WTC11 (cell line): ENCODE measurements at regions of chr3 and their contacts with region 1.

Region 1: DNA sequence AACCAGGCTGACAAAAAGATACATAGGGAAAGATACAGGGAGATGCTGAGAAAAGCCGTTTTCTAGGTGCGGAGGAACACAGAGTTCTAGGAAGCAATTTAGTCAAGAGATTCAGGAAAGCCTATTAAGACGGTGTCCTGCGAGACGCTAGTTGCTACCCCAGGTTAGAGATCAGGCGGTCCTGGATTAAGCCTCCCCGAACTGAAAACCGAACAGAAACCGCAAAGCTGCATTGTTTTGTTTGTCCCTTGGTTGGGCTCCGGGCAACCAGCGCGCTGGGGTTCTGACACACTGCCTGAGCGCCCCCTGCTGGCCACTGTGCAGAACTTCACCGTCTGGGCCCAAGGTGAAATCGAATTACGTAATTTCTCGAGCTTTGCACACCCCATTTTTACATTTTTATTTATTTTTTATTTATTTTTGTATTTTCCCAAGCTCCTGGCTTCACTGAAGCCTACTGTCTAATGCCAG is 37.3 kb upstream of the NDUFB4 start:
- DNase-seq: peak; percentile 90
- ATAC-seq: peak; percentile 66
- H3K4me3 Mint-ChIP-seq: peak overlapping the region; percentile 95
- H3K27ac Mint-ChIP-seq: no peak overlapping the region
- H3K4me1 Mint-ChIP-seq: peaks cover 26% of the 10 kb centered on the region
- H3K27me3 Mint-ChIP-seq: peaks cover 12% of the 10 kb centered on the region
- CTCF ChIP-seq: peak; percentile 98

Region 2: GRCh38 chr3:120245386-120245785 is 313.4 kb before region 1 on chr3:
- CTCF ChIA-PET with region 1: interaction called, 26 read pairs
- POLR2A ChIA-PET with region 1: no interaction called
- DNase-seq: no peak
- ATAC-seq: no peak
- H3K4me3 Mint-ChIP-seq: no peak overlapping the region
- H3K27ac Mint-ChIP-seq: no peak overlapping the region
- H3K4me1 Mint-ChIP-seq: no peaks in the 10 kb centered on the region
- H3K27me3 Mint-ChIP-seq: peaks cover 4% of the 10 kb centered on the region; the same call in 1 of the 2 replicates
- CTCF ChIP-seq: no peak

Region 3: DNA sequence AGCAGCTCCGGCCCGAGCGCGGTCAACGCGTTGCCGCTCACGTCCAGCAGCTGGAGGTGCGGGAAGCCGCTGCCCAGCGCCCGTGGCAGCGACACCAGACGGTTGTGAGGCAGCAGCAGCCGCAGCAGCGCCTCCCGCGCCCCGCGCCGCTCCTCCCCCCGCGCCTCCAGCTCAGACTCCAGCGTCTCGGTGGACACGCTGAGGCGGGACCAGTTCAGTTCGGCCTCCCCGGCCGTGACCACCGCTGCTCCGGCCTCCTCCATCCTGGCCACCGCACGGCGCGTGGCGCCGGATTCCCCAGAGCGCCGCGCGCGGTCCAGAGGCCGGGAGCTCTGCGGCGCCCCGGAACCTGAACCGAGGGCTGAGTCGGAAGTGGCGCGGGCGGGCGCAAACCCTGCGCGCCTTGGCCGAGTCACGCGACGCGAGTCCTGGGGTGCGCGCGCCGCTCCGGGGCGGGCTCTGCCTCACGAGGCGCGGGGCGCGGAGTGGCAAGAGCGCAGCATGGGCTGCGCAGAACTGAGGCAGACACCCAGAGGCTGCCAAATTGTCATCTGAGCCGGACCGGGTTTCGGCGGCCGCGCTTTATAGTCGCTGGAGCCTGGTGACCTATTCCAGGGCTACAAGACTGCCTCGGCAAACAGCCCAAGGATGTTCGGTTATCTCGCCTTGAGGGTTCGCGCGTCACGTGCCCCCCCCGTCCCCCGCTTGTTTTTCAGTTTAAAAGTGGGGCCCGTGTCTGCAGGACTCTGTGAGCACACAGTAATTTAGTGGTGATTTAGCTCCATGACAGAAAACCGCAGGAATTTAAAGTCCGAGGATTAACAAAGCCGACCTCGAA is 209.6 kb before region 1 on chr3 and contains the start of gene LRRC58:
- CTCF ChIA-PET with region 1: interaction called, 13 read pairs
- POLR2A ChIA-PET with region 1: no interaction called
- DNase-seq: peak; percentile 66
- ATAC-seq: peak; percentile 73
- H3K4me3 Mint-ChIP-seq: peak within 1 kb of the TSS; percentile 72
- H3K27ac Mint-ChIP-seq: peak within 1 kb of the TSS; percentile 58
- H3K4me1 Mint-ChIP-seq: peaks cover 25% of the 10 kb centered on the region
- H3K27me3 Mint-ChIP-seq: peaks cover 14% of the 10 kb centered on the region
- CTCF ChIP-seq: no peak
- total RNA-seq, gene LRRC58: 15.1 to 15.8 TPM (median 15.8 TPM) in 3 replicates

Region 4: DNA sequence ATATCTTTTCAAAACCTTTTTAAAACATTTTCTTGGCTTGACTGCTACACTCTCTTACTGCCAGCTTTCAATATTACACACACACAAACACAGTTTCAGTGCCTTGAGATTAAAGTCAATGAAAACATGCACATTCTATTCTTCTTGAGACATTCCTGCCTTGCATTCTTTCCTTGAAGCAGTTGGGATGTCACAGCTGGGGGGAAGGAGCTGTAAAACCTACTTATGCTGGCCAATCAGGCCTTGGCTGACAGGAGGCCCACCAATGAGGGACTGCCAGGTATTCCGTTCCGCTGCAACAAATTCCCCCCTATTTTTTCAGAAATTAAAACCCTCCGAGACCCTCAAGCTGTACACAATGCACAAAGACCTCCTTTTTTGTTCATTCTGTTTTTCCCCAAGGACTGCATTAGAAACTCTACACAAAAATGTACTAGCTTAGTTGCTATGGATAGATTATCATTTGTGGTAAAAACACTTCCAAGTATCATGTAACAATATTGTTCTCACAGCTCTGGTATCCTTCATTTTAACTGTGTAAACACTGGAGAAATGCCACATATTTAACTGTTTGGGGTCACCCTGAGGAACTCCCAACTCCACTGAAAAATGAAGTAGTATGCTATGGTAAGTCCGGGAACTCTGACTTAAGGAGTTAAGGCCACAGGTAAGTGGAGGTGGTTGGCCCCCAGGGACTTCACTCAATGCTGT is 126.5 kb before region 1 on chr3:
- CTCF ChIA-PET with region 1: interaction called, 10 read pairs
- POLR2A ChIA-PET with region 1: no interaction called
- DNase-seq: peak; percentile 64
- ATAC-seq: peak; percentile 81
- H3K4me3 Mint-ChIP-seq: no peak overlapping the region
- H3K27ac Mint-ChIP-seq: peak overlapping the region; percentile 95
- H3K4me1 Mint-ChIP-seq: peaks cover 74% of the 10 kb centered on the region
- H3K27me3 Mint-ChIP-seq: no peaks in the 10 kb centered on the region
- CTCF ChIP-seq: no peak

Region 5: GRCh38 chr3:120442975-120443517 is 115.8 kb before region 1 on chr3:
- CTCF ChIA-PET with region 1: interaction called, 14 read pairs
- POLR2A ChIA-PET with region 1: no interaction called
- DNase-seq: no peak
- ATAC-seq: peak; percentile 78
- H3K4me3 Mint-ChIP-seq: no peak overlapping the region
- H3K27ac Mint-ChIP-seq: peak overlapping the region; percentile 14; the same call in 1 of the 2 replicates
- H3K4me1 Mint-ChIP-seq: peaks cover 40% of the 10 kb centered on the region
- H3K27me3 Mint-ChIP-seq: no peaks in the 10 kb centered on the region
- CTCF ChIP-seq: no peak

Region 6: DNA sequence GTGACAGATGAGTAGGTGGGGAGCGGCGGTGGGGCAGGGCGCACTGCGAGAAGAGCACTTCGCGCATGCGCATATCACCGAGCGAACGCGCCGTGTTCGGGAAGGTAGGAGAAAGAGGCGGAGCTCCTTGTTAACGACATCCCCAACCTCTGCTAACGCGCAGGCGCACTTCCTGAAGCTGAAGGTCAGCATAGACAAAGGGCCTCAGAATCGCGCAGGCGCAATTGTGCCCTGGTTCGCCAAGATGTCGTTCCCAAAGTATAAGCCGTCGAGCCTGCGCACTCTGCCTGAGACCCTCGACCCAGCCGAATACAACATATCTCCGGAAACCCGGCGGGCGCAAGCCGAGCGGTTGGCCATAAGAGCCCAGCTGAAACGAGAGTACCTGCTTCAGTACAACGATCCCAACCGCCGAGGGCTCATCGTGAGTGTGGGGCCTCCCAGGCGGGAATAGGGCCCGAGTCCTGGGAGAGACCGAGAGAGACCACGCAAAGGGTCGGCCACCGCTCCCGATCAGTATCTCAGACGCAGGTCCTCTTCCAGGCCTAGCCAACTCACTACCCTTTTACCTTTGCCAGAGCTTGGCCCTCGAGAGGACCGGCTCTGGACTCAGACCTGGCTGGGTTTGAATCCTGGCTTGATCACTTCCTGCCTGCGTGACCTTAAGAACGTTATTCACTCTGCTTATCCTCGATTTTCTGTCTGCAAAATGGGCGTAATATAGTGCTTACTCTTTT is 37.5 kb after region 1 on chr3 and contains the start of gene NDUFB4:
- CTCF ChIA-PET with region 1: interaction called, 10 read pairs
- POLR2A ChIA-PET with region 1: interaction called, 3 read pairs
- DNase-seq: peak; percentile 98
- ATAC-seq: peak; percentile 98
- H3K4me3 Mint-ChIP-seq: peak within 1 kb of the TSS; percentile 89
- H3K27ac Mint-ChIP-seq: peak within 1 kb of the TSS; percentile 96
- H3K4me1 Mint-ChIP-seq: peaks cover 8% of the 10 kb centered on the region
- H3K27me3 Mint-ChIP-seq: peaks cover 3% of the 10 kb centered on the region; the same call in 1 of the 2 replicates
- CTCF ChIP-seq: no peak
- total RNA-seq, gene NDUFB4: 174 to 237 TPM (median 223 TPM) in 3 replicates

Region 7: DNA sequence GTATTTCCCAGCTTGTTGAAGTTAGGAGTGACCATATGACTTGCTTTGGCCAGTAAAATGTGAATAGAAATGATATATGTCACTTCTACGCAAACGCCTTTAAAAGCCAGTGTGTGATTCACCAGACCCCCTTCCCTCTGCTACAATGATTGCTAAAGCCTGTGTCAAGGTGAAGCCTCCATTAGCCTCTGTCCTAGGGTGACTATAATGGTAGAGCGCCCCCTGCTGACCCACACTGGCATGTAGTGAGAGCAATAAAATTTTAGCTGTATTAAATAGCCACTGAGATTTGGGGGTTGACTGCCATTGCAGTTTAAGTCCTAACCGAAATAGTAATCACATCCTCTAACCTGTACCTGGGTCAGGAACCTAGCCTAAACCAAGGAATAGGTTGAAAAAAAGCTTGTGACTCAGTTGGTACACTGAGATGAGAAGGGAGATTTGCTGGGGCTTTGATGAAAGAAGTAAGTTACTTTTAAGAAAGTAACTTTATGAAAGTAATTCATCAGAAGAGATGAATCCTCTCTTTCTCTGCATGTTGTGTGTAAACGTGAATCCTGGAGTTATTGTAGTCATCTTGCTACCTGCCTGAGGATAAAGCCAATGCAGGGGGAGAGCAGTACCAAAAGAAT is 236.3 kb after region 1 on chr3:
- CTCF ChIA-PET with region 1: interaction called, 42 read pairs
- POLR2A ChIA-PET with region 1: no interaction called
- DNase-seq: peak; percentile 91
- ATAC-seq: peak; percentile 93
- H3K4me3 Mint-ChIP-seq: no peak overlapping the region
- H3K27ac Mint-ChIP-seq: no peak overlapping the region
- H3K4me1 Mint-ChIP-seq: peaks cover 57% of the 10 kb centered on the region
- H3K27me3 Mint-ChIP-seq: no peaks in the 10 kb centered on the region
- CTCF ChIP-seq: peak; percentile 83